HepG2 (cell line): ENCODE measurements at regions of chr5 and their contacts with region 1.

Region 1: GRCh38 chr5:73201547-73202513 is 28.8 kb downstream of the TMEM174 start:
- DNase-seq: peak; percentile 63
- ATAC-seq: peak; percentile 99
- H3K4me3 ChIP-seq: no peak overlapping the region
- H3K27ac ChIP-seq: no peak overlapping the region
- H3K4me1 ChIP-seq: peaks cover 6% of the 10 kb centered on the region; the same call in 1 of the 2 replicates
- H3K27me3 ChIP-seq: peaks cover 2 to 27% of the 10 kb centered on the region in 2 experiments; a peak in 2 of 5 replicates
- CTCF ChIP-seq: peak; percentile 94
- EP300 ChIP-seq: no peak
- POLR2A ChIP-seq: no peak
- RAD21 ChIP-seq: peak; percentile 62

Region 2: DNA sequence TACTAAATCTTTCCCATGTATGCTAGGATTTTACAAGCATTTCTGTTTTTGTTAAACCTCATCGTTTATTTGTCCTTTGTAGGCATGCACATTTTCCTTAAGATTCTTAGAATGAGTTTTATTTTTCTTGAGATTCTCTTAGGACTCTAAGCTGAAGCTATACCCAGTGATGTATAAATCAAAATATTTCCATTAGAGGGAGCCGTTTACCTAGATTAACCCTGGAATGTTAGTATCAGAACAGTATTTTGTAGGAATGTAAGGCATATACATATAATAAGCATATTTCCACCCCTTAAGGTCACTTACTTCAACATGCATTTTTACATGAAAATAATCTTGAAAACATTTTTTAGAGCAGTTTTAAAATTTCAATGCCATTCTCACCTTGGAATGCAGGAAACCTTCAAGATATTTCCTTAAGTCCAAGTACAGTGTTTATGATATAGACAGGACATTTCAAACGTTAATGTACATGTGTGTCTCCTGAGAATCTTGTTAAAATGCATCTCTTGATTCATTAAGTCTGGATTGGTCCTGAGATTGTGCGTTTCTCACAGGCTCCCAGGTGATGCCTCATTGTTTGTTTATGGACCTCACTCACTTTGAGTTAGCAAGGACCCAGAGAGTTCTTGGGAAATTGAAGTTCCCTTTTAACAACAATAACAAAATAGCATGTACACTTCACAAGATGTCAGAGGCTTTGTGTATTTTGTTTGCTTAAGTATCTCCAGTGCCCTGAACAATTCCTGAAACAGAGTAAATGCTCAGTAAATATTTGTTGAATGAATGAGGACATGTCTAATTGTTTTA is 280.9 kb before region 1 on chr5:
- CTCF ChIA-PET with region 1: no interaction called
- POLR2A ChIA-PET with region 1: no interaction called
- in situ Hi-C with region 1: no loop called
- intact Hi-C with region 1: loop called (anchors 5 kb)
- DNase-seq: no peak
- ATAC-seq: peak; percentile 68
- H3K4me3 ChIP-seq: no peak overlapping the region
- H3K27ac ChIP-seq: no peak overlapping the region
- H3K4me1 ChIP-seq: no peaks in the 10 kb centered on the region
- H3K27me3 ChIP-seq: no peaks in the 10 kb centered on the region
- CTCF ChIP-seq: peak; percentile 45
- EP300 ChIP-seq: no peak
- POLR2A ChIP-seq: no peak
- RAD21 ChIP-seq: no peak

Region 3: GRCh38 chr5:73081093-73081492 is 120.7 kb before region 1 on chr5:
- CTCF ChIA-PET with region 1: interaction called, 5 read pairs
- POLR2A ChIA-PET with region 1: no interaction called
- in situ Hi-C with region 1: loop called (anchors 10 kb)
- intact Hi-C with region 1: loop called (anchors 5 kb)
- DNase-seq: no peak
- ATAC-seq: no peak
- H3K4me3 ChIP-seq: no peak overlapping the region
- H3K27ac ChIP-seq: no peak overlapping the region
- H3K4me1 ChIP-seq: no peaks in the 10 kb centered on the region
- H3K27me3 ChIP-seq: no peaks in the 10 kb centered on the region
- CTCF ChIP-seq: no peak
- EP300 ChIP-seq: no peak
- POLR2A ChIP-seq: no peak
- RAD21 ChIP-seq: no peak

Region 4: GRCh38 chr5:73088026-73088425 is 113.8 kb before region 1 on chr5:
- CTCF ChIA-PET with region 1: interaction called, 5 read pairs
- POLR2A ChIA-PET with region 1: no interaction called
- in situ Hi-C with region 1: loop called (anchors 10 kb)
- intact Hi-C with region 1: loop called (anchors 5 kb)
- DNase-seq: no peak
- ATAC-seq: no peak
- H3K4me3 ChIP-seq: no peak overlapping the region
- H3K27ac ChIP-seq: no peak overlapping the region
- H3K4me1 ChIP-seq: no peaks in the 10 kb centered on the region
- H3K27me3 ChIP-seq: no peaks in the 10 kb centered on the region
- CTCF ChIP-seq: no peak
- EP300 ChIP-seq: no peak
- POLR2A ChIP-seq: no peak
- RAD21 ChIP-seq: no peak